Colonic mucosa (tissue), 4 donors: ENCODE measurements at regions of chr3 and their contacts with region 1.

Region 1: DNA sequence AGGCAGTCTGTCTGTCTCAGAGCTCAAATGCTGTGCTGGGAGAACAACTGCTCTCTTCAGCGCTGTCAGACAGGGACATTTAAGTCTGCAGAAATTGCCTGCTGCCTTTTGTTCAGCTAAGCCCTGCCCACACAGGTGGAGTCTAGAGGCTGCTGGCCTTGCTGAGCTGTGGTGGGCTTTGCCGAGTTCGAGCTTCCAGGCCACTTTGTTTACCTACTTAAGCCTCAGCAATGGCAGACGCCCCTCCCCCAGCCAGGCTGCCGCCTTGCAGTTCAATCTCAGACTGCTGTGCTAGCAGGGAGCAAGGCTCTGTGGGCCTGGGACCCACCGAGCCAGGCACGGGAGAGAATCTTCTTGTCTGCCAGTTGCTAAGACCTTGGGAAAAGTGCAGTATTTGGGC is 25.0 kb upstream of the RPP14 start:
- DNase-seq: peak; percentile 12
- H3K4me3 ChIP-seq: no peak overlapping the region
- H3K27ac ChIP-seq: no peak overlapping the region
- H3K4me1 ChIP-seq: no peaks in the 10 kb centered on the region
- H3K27me3 ChIP-seq: no peaks in the 10 kb centered on the region
- CTCF ChIP-seq: no peak

Region 2: GRCh38 chr3:58206406-58207011 is 74.6 kb before region 1 on chr3:
- intact Hi-C with region 1: loop called (anchors 5 kb)
- DNase-seq: no peak
- H3K4me3 ChIP-seq: no peak overlapping the region
- H3K27ac ChIP-seq: no peak overlapping the region
- H3K4me1 ChIP-seq: no peaks in the 10 kb centered on the region
- H3K27me3 ChIP-seq: no peaks in the 10 kb centered on the region
- CTCF ChIP-seq: no peak